ENCODE measurements at regions of chr11 and their contacts with region 1.

Region 1: DNA sequence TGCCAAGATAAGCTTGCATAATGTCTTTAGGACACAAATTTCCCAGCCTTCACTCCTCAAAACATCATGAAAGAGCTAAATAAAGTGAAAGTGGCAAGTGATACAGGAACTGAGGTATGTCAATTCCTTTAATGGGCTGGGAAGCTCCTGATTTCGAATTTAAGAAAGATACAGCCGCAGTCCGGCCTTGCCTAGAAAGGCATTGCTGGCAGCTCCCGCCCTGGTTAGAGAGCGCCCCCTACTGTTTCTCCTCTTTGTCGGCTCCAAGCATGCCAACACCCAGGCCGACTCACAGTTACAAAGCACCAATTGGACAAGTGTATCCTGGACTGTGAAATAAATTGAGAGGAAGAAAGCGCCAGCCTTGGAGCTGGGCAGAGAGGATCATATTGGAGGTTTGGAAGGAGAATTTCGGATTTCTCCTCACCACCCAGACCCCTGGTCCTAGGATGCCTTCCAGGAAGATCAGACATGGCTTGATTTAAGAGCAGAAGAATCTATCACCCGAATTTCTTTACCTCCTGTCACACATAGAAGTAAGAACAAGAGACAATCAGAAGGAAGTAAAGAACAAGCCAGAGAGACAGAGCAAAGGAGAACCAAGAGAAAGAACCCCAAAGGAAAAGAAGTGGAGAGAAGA is 84.0 kb downstream of the FAM76B start:
- DNase-seq: peak; percentile 85 to 89
- H3K4me3 ChIP-seq: no peak overlapping the region
- H3K4me3 Mint-ChIP-seq: no peak overlapping the region
- H3K27ac Mint-ChIP-seq: no peak overlapping the region
- H3K4me1 ChIP-seq: peaks cover 38% of the 10 kb centered on the region
- H3K4me1 Mint-ChIP-seq: peaks cover 24% of the 10 kb centered on the region
- H3K27me3 ChIP-seq: no peaks in the 10 kb centered on the region
- H3K27me3 Mint-ChIP-seq: no peaks in the 10 kb centered on the region
- CTCF ChIP-seq: peak; percentile 93 to 94

Region 2: DNA sequence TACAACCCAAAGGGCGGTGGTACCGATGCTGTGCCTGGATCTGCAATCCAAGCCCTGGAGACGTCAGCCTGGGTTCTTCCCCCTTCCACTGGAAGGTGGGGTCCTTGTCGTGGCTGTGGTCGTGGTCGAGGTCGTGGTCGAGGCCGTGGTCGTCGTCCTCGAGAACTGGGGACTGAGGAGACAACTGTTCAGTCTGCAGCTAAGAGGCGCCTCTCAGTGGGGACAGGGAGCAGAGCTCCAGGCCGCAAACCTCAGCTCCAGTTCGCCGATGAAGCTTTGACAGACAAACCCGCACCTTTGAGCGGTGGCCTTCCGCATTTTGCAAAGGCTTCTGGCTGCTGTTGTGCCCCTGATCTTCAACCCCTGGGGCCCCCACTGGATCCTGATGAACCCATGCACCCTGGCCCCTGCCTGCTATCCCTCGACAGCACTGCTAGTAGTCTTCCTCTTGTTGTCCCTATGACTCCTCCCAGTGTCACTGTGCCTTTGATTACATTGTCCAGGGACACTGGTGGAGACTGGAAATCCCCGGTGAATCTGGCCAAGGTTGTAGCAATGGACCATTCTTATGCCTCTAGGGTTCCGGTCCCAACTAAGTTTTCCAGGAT is 654.9 kb before region 1 on chr11:
- CTCF ChIA-PET with region 1: no interaction called
- POLR2A ChIA-PET with region 1: no interaction called
- intact Hi-C with region 1: no loop called
- DNase-seq: no peak
- H3K4me3 ChIP-seq: no peak overlapping the region
- H3K4me3 Mint-ChIP-seq: no peak overlapping the region
- H3K27ac Mint-ChIP-seq: no peak overlapping the region
- H3K4me1 ChIP-seq: no peaks in the 10 kb centered on the region
- H3K4me1 Mint-ChIP-seq: peaks cover 9% of the 10 kb centered on the region
- H3K27me3 ChIP-seq: no peaks in the 10 kb centered on the region
- H3K27me3 Mint-ChIP-seq: no peaks in the 10 kb centered on the region
- CTCF ChIP-seq: no peak

Region 3: DNA sequence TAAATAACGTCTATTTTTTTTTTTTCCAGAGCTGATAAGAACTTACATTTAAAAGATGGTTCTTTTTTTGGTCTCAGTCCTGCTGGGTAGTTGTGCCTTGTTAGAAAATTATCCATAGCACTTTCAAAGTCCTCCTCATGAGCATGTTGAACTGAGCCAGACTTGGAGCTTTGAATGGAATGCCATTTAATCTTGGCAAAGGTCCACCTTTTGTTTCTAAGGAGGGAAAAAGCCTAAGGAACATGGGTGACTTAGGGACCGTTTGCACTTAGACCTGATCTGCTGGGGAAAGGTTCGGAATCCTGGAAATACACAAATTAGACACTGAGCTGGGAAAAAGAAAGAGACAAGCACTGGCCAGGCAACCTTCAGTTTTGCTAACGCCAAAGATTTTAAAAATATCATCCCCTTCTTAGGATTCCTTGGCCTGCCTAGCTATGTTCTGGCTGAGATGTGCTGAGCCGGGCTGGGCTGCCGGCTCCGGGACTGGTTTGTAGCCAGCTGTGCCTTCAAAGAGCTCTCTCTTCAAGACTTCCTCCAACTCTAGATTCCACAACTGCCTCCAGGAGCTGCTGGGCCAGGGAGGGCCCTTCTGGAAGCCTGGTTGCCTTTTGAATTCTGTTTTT is 548.6 kb before region 1 on chr11:
- CTCF ChIA-PET with region 1: interaction called, 67 read pairs
- POLR2A ChIA-PET with region 1: no interaction called
- intact Hi-C with region 1: loop called (anchors 1 kb)
- DNase-seq: no peak
- H3K4me3 ChIP-seq: no peak overlapping the region
- H3K4me3 Mint-ChIP-seq: no peak overlapping the region
- H3K27ac Mint-ChIP-seq: no peak overlapping the region
- H3K4me1 ChIP-seq: peaks cover 6% of the 10 kb centered on the region
- H3K4me1 Mint-ChIP-seq: peaks cover 18% of the 10 kb centered on the region
- H3K27me3 ChIP-seq: no peaks in the 10 kb centered on the region
- H3K27me3 Mint-ChIP-seq: no peaks in the 10 kb centered on the region
- CTCF ChIP-seq: no peak

Region 4: GRCh38 chr11:95364324-95365295 is 341.0 kb before region 1 on chr11:
- CTCF ChIA-PET with region 1: interaction called, 4 read pairs
- POLR2A ChIA-PET with region 1: no interaction called
- intact Hi-C with region 1: loop called (anchors 2 kb)
- DNase-seq: peak in 1 of 2 experiments; percentile 61
- H3K4me3 ChIP-seq: no peak overlapping the region
- H3K4me3 Mint-ChIP-seq: peak overlapping the region; percentile 50
- H3K27ac Mint-ChIP-seq: peak overlapping the region; percentile 80
- H3K4me1 ChIP-seq: peaks cover 37% of the 10 kb centered on the region
- H3K4me1 Mint-ChIP-seq: peaks cover 38% of the 10 kb centered on the region
- H3K27me3 ChIP-seq: no peaks in the 10 kb centered on the region
- H3K27me3 Mint-ChIP-seq: no peaks in the 10 kb centered on the region
- CTCF ChIP-seq: no peak

Region 5: DNA sequence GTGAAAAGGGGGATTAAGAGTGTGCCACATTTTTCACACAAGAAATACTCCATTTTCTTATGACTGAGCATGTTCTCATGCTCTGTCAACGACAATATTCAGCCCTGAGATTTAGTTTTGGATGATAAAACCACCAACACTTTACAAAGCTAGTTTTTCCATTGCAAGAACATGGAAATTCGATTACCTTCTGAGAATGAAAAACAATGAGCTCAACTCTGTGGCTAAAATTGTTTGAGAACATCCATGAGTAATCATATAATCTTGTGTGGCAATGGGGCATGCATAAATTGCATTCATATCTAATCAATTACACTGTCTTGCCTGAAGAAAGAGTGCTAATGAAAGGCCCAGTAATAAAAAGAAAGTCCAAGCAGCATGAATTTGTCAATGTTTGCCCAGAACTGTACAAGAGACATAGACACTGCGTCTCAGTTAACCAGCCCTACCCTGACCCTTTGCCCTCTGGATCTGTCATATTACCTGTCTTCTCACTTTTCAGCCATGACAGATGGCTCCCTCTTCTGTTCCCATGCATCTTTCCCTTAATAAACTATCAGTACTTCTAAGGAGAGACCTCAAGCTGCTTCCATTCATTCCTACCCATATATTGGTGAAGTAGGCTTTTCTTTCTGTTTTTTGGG is 169.4 kb before region 1 on chr11:
- CTCF ChIA-PET with region 1: no interaction called
- POLR2A ChIA-PET with region 1: no interaction called
- intact Hi-C with region 1: loop called (anchors 5 kb)
- DNase-seq: peak in 1 of 2 experiments; percentile 35
- H3K4me3 ChIP-seq: no peak overlapping the region
- H3K4me3 Mint-ChIP-seq: no peak overlapping the region
- H3K27ac Mint-ChIP-seq: no peak overlapping the region
- H3K4me1 ChIP-seq: no peaks in the 10 kb centered on the region
- H3K4me1 Mint-ChIP-seq: no peaks in the 10 kb centered on the region
- H3K27me3 ChIP-seq: no peaks in the 10 kb centered on the region
- H3K27me3 Mint-ChIP-seq: peaks cover 9% of the 10 kb centered on the region
- CTCF ChIP-seq: peak in 1 of 2 experiments; percentile 41

Region 6: DNA sequence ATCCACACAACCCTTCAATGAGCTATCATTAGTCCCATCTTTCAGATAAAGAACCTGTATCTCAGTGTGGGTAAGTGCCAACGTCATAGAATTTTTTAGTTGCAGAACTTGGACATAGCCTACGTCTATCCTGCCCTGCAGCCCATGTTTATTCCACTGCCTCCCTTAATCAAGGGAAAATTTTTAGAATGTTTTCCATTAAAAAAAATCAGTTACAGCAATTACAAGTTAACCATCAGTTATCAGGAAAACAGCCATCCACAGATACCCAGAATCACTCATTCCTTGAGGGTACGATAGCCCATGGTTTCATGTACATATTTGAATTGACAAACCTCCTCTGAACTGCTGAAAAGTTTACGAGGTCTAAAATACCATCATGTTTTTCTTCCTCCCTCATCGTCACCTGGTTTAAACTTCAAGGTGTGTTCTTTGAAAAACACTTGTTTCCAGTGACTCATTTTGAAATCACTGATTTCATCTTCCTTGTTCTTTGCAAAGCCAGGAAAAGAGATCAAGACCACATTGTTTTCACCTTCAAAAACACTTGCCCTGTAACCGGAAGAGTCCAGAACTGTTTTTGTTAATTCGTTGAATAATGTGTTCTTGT is 16.9 kb before region 1 on chr11:
- CTCF ChIA-PET with region 1: no interaction called
- POLR2A ChIA-PET with region 1: no interaction called
- intact Hi-C with region 1: no loop called
- DNase-seq: no peak
- H3K4me3 ChIP-seq: no peak overlapping the region
- H3K4me3 Mint-ChIP-seq: no peak overlapping the region
- H3K27ac Mint-ChIP-seq: no peak overlapping the region
- H3K4me1 ChIP-seq: no peaks in the 10 kb centered on the region
- H3K4me1 Mint-ChIP-seq: no peaks in the 10 kb centered on the region
- H3K27me3 ChIP-seq: no peaks in the 10 kb centered on the region; the same call in 1 of the 2 replicates
- H3K27me3 Mint-ChIP-seq: no peaks in the 10 kb centered on the region
- CTCF ChIP-seq: no peak